ENCODE measurements at regions of chr12 and their contacts with region 1.

Region 1: GRCh38 chr12:122946690-122947341 is 19.4 kb downstream of the ABCB9 start:
- DNase-seq: peak; percentile 95
- H3K4me3 Mint-ChIP-seq: no peak overlapping the region
- H3K27ac Mint-ChIP-seq: peak overlapping the region; percentile 35
- H3K4me1 Mint-ChIP-seq: peaks cover 20% of the 10 kb centered on the region
- H3K27me3 Mint-ChIP-seq: no peaks in the 10 kb centered on the region

Region 2: GRCh38 chr12:122681814-122682213 is 265.0 kb before region 1 on chr12:
- CTCF ChIA-PET with region 1: no interaction called
- POLR2A ChIA-PET with region 1: no interaction called
- intact Hi-C with region 1: no loop called
- DNase-seq: no peak
- H3K4me3 Mint-ChIP-seq: no peak overlapping the region
- H3K27ac Mint-ChIP-seq: no peak overlapping the region
- H3K4me1 Mint-ChIP-seq: no peaks in the 10 kb centered on the region
- H3K27me3 Mint-ChIP-seq: peaks cover 3% of the 10 kb centered on the region

Region 3: DNA sequence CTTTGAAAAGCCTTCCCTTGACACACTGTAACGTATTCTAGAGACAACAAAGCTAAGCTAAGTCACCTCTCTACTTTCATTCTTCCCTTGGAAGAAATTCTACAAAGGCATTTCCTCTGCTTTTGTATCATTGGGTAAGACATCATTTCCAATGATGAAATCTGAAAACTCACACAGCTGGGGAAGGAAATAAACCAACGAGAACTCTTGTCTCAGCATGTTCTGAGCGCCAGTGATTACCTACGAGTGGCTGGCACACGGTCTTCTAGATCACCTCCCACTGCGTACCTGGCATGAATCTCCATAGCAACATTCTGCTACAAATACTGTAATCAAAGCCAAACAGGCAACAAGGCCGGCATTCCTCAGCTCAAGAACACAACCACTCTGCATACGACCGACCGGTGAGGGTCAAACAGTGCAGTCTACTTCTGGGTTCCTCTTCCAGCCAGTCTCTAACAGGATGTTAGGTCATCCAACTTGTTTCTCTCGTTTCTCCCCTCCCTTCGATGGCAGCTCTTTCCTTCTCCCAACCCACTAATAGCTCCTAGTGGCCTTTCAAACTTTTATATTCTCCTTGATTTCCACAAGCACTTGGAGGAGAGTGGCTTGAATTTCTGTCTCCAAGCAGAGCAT is 58.5 kb before region 1 on chr12:
- CTCF ChIA-PET with region 1: interaction called, 10 read pairs
- POLR2A ChIA-PET with region 1: no interaction called
- intact Hi-C with region 1: loop called (anchors 2 kb)
- DNase-seq: peak; percentile 65
- H3K4me3 Mint-ChIP-seq: peak overlapping the region; percentile 70
- H3K27ac Mint-ChIP-seq: peak overlapping the region; percentile 88
- H3K4me1 Mint-ChIP-seq: peaks cover 77% of the 10 kb centered on the region
- H3K27me3 Mint-ChIP-seq: peaks cover 5% of the 10 kb centered on the region

Region 4: DNA sequence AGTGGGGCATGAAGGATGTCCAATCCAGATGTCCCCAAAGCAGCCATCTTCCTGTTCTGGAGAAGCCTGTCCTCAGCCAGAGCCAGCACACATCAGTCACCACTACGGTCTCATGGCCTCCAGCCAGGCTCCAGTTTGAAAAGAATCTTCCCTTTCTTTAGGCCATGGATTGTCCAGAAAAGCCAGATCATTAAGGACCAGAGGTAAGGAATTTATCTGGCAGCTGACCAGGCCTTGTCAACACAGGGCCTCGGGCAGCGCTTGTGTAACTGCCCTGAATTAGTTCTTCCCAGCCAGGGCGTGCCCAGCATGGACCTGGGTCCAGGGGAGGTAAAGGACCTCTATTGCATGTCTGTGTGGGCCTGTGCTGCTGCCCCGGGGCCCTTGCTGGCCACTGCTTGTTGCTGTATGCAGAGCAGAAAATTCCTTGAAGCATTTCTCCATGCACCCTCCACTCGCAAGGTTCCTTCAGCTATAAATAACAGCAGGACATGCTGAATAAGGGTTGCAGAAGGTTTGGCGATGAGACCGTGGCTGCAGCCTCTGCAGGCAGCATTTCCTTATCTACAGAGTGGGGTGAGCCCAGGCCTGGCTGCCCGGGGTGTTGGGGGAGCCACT is 29.2 kb before region 1 on chr12:
- CTCF ChIA-PET with region 1: no interaction called
- POLR2A ChIA-PET with region 1: no interaction called
- intact Hi-C with region 1: no loop called
- DNase-seq: no peak
- H3K4me3 Mint-ChIP-seq: no peak overlapping the region
- H3K27ac Mint-ChIP-seq: no peak overlapping the region
- H3K4me1 Mint-ChIP-seq: peaks cover 3% of the 10 kb centered on the region
- H3K27me3 Mint-ChIP-seq: no peaks in the 10 kb centered on the region